Activated CD8-positive, alpha-beta T cell treated with anti-CD3 and anti-CD28 coated beads, Interleukin-2, amount 10 ng/mL, durations not matched to agents 7 days and 5 days (primary cell): ENCODE measurements at regions of chr18 and their contacts with region 1.

Region 1: DNA sequence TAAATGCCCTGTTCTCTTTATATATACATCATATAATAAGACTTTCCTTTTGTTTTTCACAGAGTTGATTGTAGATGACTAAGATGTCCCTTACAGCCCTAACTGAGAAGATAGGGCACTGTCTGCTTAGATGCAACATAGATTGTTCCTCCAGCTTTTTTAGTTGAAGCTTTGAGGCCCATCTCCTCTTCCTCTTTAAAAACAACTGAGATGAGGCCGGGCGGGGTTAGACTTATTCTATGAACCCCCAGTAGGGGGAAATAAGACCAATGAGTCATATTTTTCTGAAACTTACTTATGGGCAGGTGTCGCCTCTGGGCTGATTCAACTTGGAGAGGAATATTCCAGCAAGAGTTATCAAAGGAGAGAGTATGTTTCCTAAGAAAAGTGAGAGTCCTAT is 84.6 kb downstream of the FBXO15 start:
- DNase-seq: peak; percentile 48
- ATAC-seq: peak; percentile 48
- H3K4me3 Mint-ChIP-seq: no peak overlapping the region
- H3K27ac Mint-ChIP-seq: no peak overlapping the region
- H3K4me1 Mint-ChIP-seq: peaks cover 39% of the 10 kb centered on the region
- H3K27me3 Mint-ChIP-seq: no peaks in the 10 kb centered on the region

Region 2: DNA sequence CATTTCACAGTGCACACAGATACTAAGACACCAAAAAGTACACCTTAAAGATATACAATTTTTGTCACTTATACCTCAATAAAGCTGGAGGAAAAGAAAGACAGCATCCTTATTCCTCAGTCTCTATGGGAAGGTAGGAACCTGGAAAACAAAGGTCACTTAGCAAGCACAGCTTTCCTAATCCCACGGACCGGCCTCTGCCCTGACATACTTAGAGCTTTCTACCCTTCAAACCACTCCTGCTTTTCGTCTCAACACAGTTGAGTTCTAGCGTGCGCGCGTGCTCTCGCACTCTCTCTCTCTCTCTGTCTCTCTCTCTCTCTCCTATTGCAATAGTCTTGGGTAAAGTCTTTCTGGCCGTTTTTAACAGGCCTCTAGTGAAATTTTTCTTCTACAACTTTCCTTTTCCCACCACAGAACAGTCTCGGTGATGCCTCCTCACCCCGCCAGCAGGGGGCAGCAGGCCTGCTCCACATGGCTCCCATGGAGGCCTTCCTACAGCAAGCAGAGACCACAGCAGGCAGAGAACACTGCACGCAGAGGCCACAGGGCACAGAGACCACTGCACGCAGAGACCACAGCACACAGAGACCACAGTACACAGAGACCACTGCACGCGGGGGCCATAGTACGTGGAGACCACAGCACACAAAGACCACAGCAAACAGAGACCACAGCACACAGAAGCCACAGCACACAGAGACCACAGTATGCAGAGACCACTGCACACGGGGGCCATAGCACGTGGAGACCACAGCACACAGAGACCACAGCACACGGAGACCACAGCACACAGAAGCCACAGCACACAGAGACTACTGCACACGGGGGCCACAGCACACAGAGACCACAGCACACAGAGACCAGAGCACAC is 22.3 kb before region 1 on chr18:
- CTCF ChIA-PET with region 1: interaction called, 13 read pairs
- POLR2A ChIA-PET with region 1: no interaction called
- DNase-seq: peak; percentile 62
- ATAC-seq: peak; percentile 75
- H3K4me3 Mint-ChIP-seq: no peak overlapping the region
- H3K27ac Mint-ChIP-seq: no peak overlapping the region
- H3K4me1 Mint-ChIP-seq: no peaks in the 10 kb centered on the region
- H3K27me3 Mint-ChIP-seq: no peaks in the 10 kb centered on the region